Mammary epithelial cell (primary cell): ENCODE measurements at regions of chr4 and their contacts with region 1.

Region 1: DNA sequence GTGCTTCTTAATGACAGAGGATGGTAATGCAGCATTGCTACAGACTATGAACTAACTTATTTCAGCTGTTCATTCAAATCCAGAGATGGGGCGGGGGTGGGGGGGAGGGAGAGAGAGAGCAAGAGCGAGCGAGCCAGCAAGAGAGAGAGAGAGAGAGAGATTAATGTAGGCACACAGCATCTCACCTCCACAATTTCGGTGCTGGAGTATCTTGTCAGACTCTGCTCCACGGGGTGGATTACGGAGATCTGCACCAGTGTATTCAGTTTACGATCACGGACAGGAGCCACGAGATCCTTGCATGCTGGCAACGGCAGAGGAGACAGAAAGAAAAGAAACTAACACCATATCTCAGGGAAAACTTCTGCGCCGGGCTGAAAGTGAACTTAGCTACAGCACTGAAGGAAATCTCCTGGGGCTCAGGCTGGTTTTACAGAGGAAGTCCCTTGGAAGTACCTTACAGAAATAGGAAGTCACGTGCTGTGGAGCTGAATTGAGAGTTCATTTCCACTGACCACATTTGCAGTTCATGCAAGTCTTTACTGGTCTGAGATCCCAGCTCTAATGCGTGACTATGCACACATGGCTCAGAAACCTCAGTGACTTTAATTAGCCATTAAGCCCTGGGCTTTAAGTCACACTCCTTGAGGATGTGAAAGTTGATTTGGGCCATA is 440.9 kb downstream of the INPP4B start:
- DNase-seq: peak; percentile 96
- H3K4me3 ChIP-seq: peak overlapping the region; percentile 69 to 99 (median 79)
- H3K27ac ChIP-seq: peak overlapping the region; percentile 100
- H3K4me1 ChIP-seq: peaks cover 45% of the 10 kb centered on the region
- H3K27me3 ChIP-seq: no peaks in the 10 kb centered on the region
- CTCF ChIP-seq: no peak

Region 2: DNA sequence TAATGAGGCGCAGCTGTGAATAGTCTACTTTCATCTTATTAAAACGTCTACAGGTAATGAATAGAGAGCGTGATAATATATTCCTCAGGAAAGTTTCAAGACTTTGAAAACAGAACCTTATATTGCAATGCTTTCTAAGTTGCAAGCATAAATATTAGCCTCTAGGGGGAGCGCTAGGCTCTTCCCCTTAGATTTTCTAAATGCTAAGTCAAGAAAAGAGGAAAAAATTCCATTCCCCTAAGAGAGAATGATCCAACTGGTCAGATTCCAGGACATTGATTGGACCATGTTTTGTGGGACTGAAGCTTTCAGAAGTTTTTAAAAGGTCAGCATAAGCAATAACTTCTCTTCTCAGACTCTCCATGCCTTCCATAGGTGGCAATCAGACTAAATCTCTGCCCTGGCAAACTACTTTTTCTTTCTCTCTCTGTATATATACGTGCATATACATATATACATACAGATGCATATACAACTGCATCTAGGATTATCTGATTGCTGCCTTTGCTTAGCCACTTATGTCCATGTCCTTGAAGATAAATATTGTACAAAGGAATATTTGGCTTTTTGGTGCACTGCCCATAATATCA is 51.9 kb before region 1 on chr4:
- CTCF ChIA-PET with region 1: interaction called, 3 read pairs
- dilution Hi-C with region 1: no loop called
- in situ Hi-C with region 1: loop called in 1 of 2 experiments (anchors 10 kb)
- intact Hi-C with region 1: loop called (anchors 1 kb)
- DNase-seq: peak; percentile 59
- H3K4me3 ChIP-seq: peak overlapping the region in 1 of 3 experiments; percentile 24
- H3K27ac ChIP-seq: peak overlapping the region; percentile 32
- H3K4me1 ChIP-seq: peaks cover 33% of the 10 kb centered on the region
- H3K27me3 ChIP-seq: no peaks in the 10 kb centered on the region
- CTCF ChIP-seq: peak; percentile 83 to 91

Region 3: GRCh38 chr4:142416711-142417275 is 11.6 kb after region 1 on chr4:
- CTCF ChIA-PET with region 1: interaction called, 4 read pairs
- dilution Hi-C with region 1: no loop called
- in situ Hi-C with region 1: no loop called
- intact Hi-C with region 1: loop called (anchors 1 kb)
- DNase-seq: peak; percentile 72
- H3K4me3 ChIP-seq: peak overlapping the region in 1 of 3 experiments; percentile 7
- H3K27ac ChIP-seq: peak overlapping the region; percentile 75
- H3K4me1 ChIP-seq: peaks cover 47% of the 10 kb centered on the region
- H3K27me3 ChIP-seq: no peaks in the 10 kb centered on the region
- CTCF ChIP-seq: no peak

Region 4: GRCh38 chr4:142549726-142550463 is 144.7 kb after region 1 on chr4:
- CTCF ChIA-PET with region 1: interaction called, 6 read pairs
- dilution Hi-C with region 1: no loop called
- in situ Hi-C with region 1: no loop called
- intact Hi-C with region 1: loop called (anchors 1 kb)
- DNase-seq: peak; percentile 97
- H3K4me3 ChIP-seq: no peak overlapping the region
- H3K27ac ChIP-seq: peak overlapping the region; percentile 100
- H3K4me1 ChIP-seq: peaks cover 43% of the 10 kb centered on the region
- H3K27me3 ChIP-seq: no peaks in the 10 kb centered on the region
- CTCF ChIP-seq: peak in 1 of 2 donors; percentile 11

Region 5: DNA sequence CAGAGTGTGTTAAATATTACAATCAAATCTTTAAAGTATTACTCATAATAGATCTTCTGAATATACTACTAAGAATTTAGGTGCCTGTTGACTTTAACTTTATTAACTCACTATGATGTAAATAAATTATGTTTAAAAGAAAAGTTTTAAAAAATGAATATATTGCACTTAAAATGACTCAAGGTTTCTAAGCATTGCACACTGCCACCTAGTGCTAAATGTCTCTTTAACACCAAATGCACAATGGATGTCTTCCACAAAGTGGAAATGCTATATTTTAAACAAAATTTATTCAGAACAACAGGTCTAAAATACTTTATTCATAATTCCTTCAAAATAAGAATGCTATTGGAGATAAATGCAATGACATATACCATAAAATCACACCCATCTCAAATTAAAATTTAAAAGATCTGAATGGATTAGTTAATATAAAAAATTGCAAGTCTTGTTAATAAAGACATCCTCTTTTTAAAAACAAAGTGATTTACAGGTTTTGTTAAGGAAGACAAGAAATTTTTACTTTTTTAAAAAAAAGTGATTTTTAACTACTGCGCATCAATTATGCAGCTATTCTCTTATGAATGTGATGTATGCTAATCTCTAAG is 435.5 kb after region 1 on chr4:
- CTCF ChIA-PET with region 1: no interaction called
- dilution Hi-C with region 1: no loop called
- in situ Hi-C with region 1: no loop called
- intact Hi-C with region 1: loop called (anchors 2 kb)
- DNase-seq: no peak
- H3K4me3 ChIP-seq: no peak overlapping the region
- H3K27ac ChIP-seq: no peak overlapping the region
- H3K4me1 ChIP-seq: peaks cover 4% of the 10 kb centered on the region
- H3K27me3 ChIP-seq: no peaks in the 10 kb centered on the region
- CTCF ChIP-seq: peak; percentile 57 to 66